Heart right ventricle (tissue), 16 donors: ENCODE measurements at regions of chr6 and their contacts with region 1.

Region 1: GRCh38 chr6:75098709-75099108 is 107.1 kb downstream of the COL12A1 start:
- DNase-seq: peak; percentile 28 to 74
- ATAC-seq: peak; percentile 87 to 97 (median 94)
- H3K4me3 ChIP-seq: no peak overlapping the region
- H3K27ac ChIP-seq: peak overlapping the region in 3 of 10 donors; percentile 14 to 36 (median 29)
- H3K4me1 ChIP-seq: peaks cover 0 to 14% (median 4%) of the 10 kb centered on the region in 9 donors
- H3K27me3 ChIP-seq: no peaks in the 10 kb centered on the region
- CTCF ChIP-seq: no peak

Region 2: GRCh38 chr6:74409447-74409846 is 689.3 kb before region 1 on chr6:
- intact Hi-C with region 1: loop called in 1 of 10 experiments (anchors 10 kb)
- DNase-seq: no peak
- ATAC-seq: peak in 5 of 8 donors; percentile 34 to 76 (median 67)
- H3K4me3 ChIP-seq: no peak overlapping the region
- H3K27ac ChIP-seq: no peak overlapping the region
- H3K4me1 ChIP-seq: no peaks in the 10 kb centered on the region
- H3K27me3 ChIP-seq: no peaks in the 10 kb centered on the region
- CTCF ChIP-seq: peak in 8 of 9 donors; percentile 8 to 62 (median 44)

Region 3: DNA sequence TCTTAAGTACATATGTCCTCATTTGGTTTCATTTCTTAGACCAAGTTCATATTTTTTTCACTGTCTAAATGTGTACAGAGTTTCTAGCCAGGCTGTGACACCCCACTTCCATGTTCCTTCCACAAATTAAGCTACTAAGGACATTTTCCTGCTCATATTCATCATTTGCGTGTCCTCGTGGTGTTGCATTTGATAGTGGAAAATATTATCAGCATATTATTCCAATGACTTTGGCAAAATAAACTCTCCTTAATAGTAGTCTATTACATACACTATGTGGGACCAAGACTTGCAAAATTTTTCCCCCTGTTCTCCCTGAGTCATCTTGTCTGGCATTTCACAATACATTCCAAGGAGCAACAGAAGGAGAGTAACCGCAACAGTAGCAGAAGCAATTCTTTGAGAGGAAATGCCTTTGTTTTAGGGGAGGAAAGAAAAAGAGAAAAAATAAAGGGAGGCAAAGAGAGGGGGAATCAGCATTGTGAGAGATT is 492.1 kb before region 1 on chr6:
- intact Hi-C with region 1: no loop called
- DNase-seq: no peak
- ATAC-seq: peak in 7 of 8 donors; percentile 51 to 96 (median 81)
- H3K4me3 ChIP-seq: no peak overlapping the region
- H3K27ac ChIP-seq: peak overlapping the region in 5 of 10 donors; percentile 41 to 70 (median 54)
- H3K4me1 ChIP-seq: peaks cover 0 to 19% (median 0%) of the 10 kb centered on the region in 9 donors
- H3K27me3 ChIP-seq: no peaks in the 10 kb centered on the region
- CTCF ChIP-seq: no peak

Region 4: GRCh38 chr6:75041381-75041780 is 57.3 kb before region 1 on chr6:
- intact Hi-C with region 1: no loop called
- DNase-seq: no peak
- ATAC-seq: no peak
- H3K4me3 ChIP-seq: no peak overlapping the region
- H3K27ac ChIP-seq: no peak overlapping the region
- H3K4me1 ChIP-seq: no peaks in the 10 kb centered on the region
- H3K27me3 ChIP-seq: no peaks in the 10 kb centered on the region
- CTCF ChIP-seq: no peak

Region 5: GRCh38 chr6:75115481-75115880 is 16.8 kb after region 1 on chr6:
- intact Hi-C with region 1: no loop called
- DNase-seq: no peak
- ATAC-seq: no peak
- H3K4me3 ChIP-seq: no peak overlapping the region
- H3K27ac ChIP-seq: no peak overlapping the region
- H3K4me1 ChIP-seq: no peaks in the 10 kb centered on the region
- H3K27me3 ChIP-seq: no peaks in the 10 kb centered on the region
- CTCF ChIP-seq: no peak